ENCODE measurements at regions of chr11 and their contacts with region 1.

Region 1: DNA sequence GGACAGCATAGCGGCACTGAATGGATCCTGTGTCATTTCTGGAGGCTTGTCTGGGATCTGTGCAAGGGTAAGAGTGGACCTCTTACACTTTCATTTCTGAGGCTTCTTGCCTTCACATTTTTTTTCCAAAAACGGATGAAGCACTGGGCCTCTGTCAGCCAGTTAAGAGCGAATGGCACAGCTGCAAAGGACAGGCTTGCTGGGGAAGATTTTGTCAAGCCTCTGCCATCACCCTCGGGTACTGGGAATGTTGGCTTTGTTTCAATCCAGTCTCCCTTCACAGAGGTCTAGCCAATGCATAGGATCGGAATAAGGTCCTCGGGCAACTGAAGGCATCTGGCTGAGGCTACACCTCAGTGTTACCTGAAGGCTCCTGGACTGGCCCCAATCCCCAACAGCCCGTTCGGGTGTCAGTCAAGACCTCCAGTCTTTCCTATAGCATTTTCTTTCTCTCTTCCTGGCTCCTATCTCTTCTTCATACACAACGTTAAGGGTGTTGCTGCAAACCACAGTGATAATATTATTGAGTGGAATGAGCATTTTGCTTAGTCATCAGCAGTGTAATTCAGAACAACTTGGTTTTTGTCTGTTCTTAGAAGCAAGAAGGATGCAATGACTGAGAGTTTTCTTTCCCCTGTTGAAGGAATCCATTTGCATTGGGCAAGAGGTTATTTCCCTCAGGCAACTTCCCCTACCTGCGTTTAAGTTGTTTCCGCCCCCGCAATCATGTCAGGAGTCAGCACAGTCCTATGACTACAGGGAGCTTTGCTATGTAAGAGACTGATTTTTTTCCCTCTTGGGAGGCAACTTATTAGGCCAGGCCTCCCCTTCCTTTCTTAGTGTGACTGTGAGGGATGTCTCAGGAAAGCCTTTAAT is 22.8 kb downstream of the NPAT start:
- DNase-seq: peak; percentile 91
- H3K4me3 Mint-ChIP-seq: no peak overlapping the region
- H3K27ac Mint-ChIP-seq: peak overlapping the region; percentile 76
- H3K4me1 Mint-ChIP-seq: peaks cover 89% of the 10 kb centered on the region
- H3K27me3 Mint-ChIP-seq: no peaks in the 10 kb centered on the region

Region 2: GRCh38 chr11:108170184-108170583 is 29.5 kb before region 1 on chr11:
- CTCF ChIA-PET with region 1: interaction called, 5 read pairs
- POLR2A ChIA-PET with region 1: no interaction called
- intact Hi-C with region 1: loop called (anchors 1 kb)
- DNase-seq: no peak
- H3K4me3 Mint-ChIP-seq: no peak overlapping the region
- H3K27ac Mint-ChIP-seq: no peak overlapping the region
- H3K4me1 Mint-ChIP-seq: peaks cover 43% of the 10 kb centered on the region
- H3K27me3 Mint-ChIP-seq: no peaks in the 10 kb centered on the region

Region 3: GRCh38 chr11:108210441-108210840 is 10.8 kb after region 1 on chr11:
- CTCF ChIA-PET with region 1: interaction called, 4 read pairs
- POLR2A ChIA-PET with region 1: interaction called, 4 read pairs
- intact Hi-C with region 1: loop called (anchors 1 kb)
- DNase-seq: no peak
- H3K4me3 Mint-ChIP-seq: no peak overlapping the region
- H3K27ac Mint-ChIP-seq: peak overlapping the region; percentile 59
- H3K4me1 Mint-ChIP-seq: peaks cover 54% of the 10 kb centered on the region
- H3K27me3 Mint-ChIP-seq: no peaks in the 10 kb centered on the region

Region 4: DNA sequence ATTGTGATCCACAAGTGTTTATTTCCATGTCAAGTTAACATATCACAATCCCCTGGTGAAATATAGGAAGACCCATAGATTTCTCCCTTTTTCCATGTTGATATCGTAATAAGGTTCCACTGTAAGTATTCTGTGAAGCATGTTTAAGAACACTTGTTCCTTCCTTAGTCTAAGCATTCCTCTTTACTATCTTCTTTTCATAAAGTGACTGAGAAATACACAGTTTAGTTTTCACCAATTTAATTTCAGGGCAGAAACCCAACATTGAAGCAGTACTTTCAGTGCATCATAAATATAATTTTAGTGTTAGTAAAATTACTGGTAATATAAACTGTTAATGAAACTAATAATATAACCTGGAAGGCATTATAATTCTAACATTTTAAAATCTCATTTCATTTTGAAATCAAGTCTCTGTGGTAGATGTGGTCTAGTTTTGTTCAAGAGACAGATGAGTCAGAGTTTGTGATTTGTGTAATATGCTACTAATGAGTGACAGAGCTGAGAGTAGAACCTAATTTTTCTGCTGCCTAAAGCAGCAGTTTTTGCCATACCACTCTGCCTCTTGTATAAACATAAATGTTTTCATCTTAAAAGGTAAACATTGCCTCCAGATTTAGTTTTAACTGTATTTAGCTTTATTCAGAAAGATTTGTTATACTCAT is 102.6 kb after region 1 on chr11:
- CTCF ChIA-PET with region 1: no interaction called
- POLR2A ChIA-PET with region 1: no interaction called
- intact Hi-C with region 1: loop called (anchors 1 kb)
- DNase-seq: no peak
- H3K4me3 Mint-ChIP-seq: no peak overlapping the region
- H3K27ac Mint-ChIP-seq: no peak overlapping the region
- H3K4me1 Mint-ChIP-seq: peaks cover 20% of the 10 kb centered on the region
- H3K27me3 Mint-ChIP-seq: no peaks in the 10 kb centered on the region

Measured in activated CD4-positive, alpha-beta memory T cell treated with anti-CD3 and anti-CD28 coated beads for 36 hours (primary cell).